MCF 10A (cell line): ENCODE measurements at regions of chr10 and their contacts with region 1.

Region 1: DNA sequence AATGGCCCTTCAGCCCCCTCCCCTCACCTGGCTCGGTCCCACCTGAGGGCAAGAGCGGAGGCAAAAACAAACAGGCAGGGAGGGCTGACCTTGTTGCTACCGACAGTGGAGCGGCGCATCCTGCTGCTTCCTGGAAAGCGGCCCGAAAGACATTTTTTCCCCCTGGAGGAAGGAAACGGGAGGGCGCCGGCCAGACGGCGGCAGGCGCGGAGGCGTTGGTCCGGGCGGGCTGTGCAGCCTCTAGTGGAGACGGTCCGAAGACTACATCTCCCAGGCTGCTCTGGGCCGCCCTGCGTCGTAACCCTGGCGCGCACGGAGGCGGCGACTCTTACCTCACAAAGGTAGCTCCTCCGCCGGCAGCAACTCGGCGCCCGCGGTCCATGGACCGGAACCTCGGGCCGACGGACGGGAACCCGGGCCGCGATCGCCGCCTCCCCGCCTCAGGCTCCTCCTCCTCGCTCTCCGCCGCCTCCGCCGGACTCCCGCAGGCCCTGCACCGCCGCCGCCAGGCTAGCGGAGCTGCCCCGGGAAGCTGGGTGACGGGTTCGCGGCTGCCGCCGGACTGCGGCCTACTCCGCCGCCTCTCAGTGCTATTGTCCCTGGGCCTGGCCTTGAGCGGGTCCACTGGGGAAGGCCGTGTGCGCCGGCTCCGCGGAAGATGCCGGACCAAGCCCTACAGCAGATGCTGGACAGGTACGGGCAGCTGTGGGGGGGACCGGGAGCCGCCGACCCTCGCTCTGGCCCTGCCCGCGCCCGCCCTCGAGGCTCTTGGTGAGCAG is at the starts of genes CPEB3 and MARCHF5:
- DNase-seq: peak; percentile 96
- H3K4me3 Mint-ChIP-seq: peak within 1 kb of the TSS; percentile 90
- H3K27ac Mint-ChIP-seq: peak within 1 kb of the TSS; percentile 83
- H3K4me1 Mint-ChIP-seq: peaks cover 5% of the 10 kb centered on the region
- H3K27me3 Mint-ChIP-seq: no peaks in the 10 kb centered on the region
- CTCF ChIP-seq: peak; percentile 52
- total RNA-seq, gene CPEB3: 2.8 and 4.2 TPM in 2 replicates
- total RNA-seq, gene MARCHF5: 52.1 and 53.1 TPM in 2 replicates

Region 2: DNA sequence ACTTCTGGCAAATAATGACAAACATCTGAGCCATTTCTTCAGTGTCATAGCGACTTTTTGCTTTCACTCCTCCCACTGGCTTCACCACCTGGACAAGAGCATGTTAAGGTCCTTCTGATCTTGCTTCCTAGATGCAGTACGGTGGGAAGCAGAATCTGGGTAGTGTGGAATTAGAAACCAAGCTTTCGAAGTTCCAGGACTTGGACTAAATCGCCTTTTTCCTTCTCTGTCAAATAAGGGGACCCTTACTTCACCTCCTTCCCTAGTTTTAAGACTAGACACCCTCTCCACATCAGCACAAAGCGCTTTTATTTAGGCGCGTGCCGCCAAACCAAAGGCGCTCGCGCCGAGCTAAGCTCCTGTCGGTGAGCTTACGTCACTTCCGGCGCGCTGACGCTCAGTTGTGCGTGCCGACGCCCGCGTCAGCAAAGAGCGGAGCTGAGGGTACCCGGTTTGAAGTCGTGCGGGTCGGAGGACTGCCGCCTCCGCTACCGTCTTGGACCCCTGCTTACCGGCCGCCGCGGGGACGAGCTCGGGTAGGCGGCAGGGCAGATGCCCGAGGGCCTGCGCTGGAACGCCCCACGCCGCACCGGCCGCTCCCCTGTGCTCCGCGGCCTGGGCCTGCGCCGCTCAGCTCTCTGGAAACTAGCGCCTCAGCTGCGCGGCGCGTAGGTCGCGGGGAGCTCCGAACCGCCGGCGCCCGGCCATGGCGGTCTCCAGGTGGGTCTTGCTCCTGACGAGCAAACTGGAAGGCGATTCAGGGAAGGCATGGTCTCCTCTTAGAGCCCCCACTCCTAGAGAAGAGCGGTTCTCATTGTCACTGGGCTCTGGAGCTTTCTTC is 367.4 kb before region 1 on chr10 and contains the start of gene BTAF1:
- CTCF ChIA-PET with region 1: interaction called, 7 read pairs
- POLR2A ChIA-PET with region 1: interaction called, 10 read pairs
- intact Hi-C with region 1: no loop called
- DNase-seq: peak; percentile 90
- H3K4me3 Mint-ChIP-seq: peak within 1 kb of the TSS; percentile 84
- H3K27ac Mint-ChIP-seq: peak within 1 kb of the TSS; percentile 98
- H3K4me1 Mint-ChIP-seq: peaks cover 17% of the 10 kb centered on the region
- H3K27me3 Mint-ChIP-seq: no peaks in the 10 kb centered on the region
- CTCF ChIP-seq: no peak
- total RNA-seq, gene BTAF1: 35.5 and 37.0 TPM in 2 replicates

Region 3: GRCh38 chr10:92103376-92104090 is 187.5 kb before region 1 on chr10:
- CTCF ChIA-PET with region 1: interaction called, 3 read pairs
- POLR2A ChIA-PET with region 1: interaction called, 10 read pairs
- intact Hi-C with region 1: loop called (anchors 1 kb)
- DNase-seq: no peak
- H3K4me3 Mint-ChIP-seq: no peak overlapping the region
- H3K27ac Mint-ChIP-seq: no peak overlapping the region
- H3K4me1 Mint-ChIP-seq: peaks cover 15% of the 10 kb centered on the region
- H3K27me3 Mint-ChIP-seq: no peaks in the 10 kb centered on the region
- CTCF ChIP-seq: no peak

Region 4: DNA sequence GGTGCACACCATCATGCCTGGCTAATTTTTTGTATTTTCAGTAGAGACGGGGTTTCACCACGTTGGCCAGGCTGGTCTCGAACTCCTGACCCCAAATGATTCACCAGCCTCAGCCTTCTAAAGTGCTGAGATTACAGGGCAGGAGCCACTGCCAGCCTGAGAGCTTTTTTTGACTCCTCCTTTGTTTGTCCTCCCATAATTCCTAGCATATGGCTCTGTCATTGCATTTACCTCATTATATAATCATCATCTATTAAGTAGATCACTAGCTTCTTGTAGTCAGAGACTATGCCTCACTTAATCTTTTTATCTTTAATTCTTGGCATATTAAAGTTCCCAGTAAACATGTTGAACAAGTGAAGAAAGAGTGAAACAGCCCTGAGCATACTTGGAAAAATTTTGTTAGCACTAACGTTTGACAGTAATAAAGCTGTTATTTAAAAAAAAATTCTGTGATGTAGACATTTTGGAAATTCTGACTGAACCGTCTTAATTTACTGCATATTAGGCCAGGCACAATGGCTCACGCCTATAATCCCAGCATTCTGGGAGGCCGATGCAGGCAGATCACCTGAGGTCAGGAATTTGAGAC is 82.2 kb before region 1 on chr10:
- CTCF ChIA-PET with region 1: interaction called, 5 read pairs
- POLR2A ChIA-PET with region 1: interaction called, 47 read pairs
- intact Hi-C with region 1: no loop called
- DNase-seq: no peak
- H3K4me3 Mint-ChIP-seq: no peak overlapping the region
- H3K27ac Mint-ChIP-seq: no peak overlapping the region
- H3K4me1 Mint-ChIP-seq: peaks cover 11% of the 10 kb centered on the region
- H3K27me3 Mint-ChIP-seq: no peaks in the 10 kb centered on the region
- CTCF ChIP-seq: no peak

Region 5: DNA sequence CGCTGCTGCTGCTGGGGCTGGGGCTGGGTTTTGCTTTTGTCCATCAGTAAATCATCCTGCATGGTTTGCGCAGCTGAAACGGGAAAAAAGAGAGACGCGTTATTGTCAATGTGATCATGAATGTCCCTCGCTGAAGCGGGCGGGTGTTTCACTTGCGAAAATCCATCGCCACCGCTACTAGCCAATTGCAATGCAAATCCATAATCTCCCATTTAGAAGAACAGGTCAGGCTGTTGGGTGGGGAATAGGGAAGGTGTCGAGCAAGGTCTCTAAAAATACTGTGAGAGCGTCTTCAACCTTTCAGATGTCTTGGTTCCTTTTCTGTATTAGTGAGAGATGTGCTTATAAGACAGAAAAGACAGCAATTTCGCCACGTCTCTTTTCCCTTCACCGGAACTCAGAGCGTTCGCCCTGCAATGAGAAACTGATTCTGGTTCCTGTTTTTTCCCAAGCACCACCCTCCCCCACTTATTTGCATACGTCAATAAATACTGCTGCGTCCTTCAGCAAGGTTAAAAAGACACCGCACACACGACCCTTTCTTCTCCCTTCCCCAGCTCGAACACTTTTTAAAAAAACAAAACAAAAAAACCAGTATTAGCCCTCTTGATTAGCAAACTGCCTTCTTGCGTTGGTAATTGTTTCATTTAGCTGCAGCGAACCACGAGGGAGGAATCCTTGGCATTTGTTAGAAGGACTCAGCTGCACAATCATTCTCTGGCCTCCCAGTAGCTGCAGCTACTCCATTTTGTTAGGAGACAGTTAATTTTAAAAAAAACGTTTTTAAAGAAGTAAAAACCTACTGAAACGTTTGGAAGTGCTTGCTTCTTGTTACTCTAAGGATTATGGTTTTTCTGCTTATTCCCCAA is 50.5 kb before region 1 on chr10:
- CTCF ChIA-PET with region 1: interaction called, 10 read pairs
- POLR2A ChIA-PET with region 1: interaction called, 371 read pairs
- intact Hi-C with region 1: loop called (anchors 1 kb)
- DNase-seq: peak; percentile 75
- H3K4me3 Mint-ChIP-seq: peak overlapping the region; percentile 76
- H3K27ac Mint-ChIP-seq: peak overlapping the region; percentile 14
- H3K4me1 Mint-ChIP-seq: peaks cover 35% of the 10 kb centered on the region
- H3K27me3 Mint-ChIP-seq: no peaks in the 10 kb centered on the region
- CTCF ChIP-seq: no peak

Region 6: DNA sequence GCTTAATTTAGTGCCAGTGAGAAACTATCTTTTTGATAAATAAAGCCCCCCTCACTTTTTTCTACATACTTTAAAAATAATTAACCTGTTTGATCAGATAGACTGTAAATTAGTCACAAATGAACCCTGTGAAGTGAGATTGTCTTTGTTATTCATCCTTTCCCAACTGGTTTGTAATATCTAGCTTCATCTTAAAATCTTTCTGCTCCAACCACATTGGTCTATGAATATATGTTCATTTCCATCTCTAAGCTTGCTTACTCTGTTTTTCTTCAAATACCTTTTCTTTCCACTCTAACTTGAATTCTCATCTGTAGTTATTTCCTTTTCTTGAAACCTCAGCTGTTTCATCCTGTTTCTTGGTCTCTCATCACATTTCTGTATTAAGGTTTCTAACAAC is 12.1 kb after region 1 on chr10:
- CTCF ChIA-PET with region 1: interaction called, 21 read pairs
- POLR2A ChIA-PET with region 1: interaction called, 10 read pairs
- intact Hi-C with region 1: no loop called
- DNase-seq: no peak
- H3K4me3 Mint-ChIP-seq: no peak overlapping the region
- H3K27ac Mint-ChIP-seq: no peak overlapping the region
- H3K4me1 Mint-ChIP-seq: peaks cover 15% of the 10 kb centered on the region
- H3K27me3 Mint-ChIP-seq: no peaks in the 10 kb centered on the region
- CTCF ChIP-seq: no peak

Region 7: DNA sequence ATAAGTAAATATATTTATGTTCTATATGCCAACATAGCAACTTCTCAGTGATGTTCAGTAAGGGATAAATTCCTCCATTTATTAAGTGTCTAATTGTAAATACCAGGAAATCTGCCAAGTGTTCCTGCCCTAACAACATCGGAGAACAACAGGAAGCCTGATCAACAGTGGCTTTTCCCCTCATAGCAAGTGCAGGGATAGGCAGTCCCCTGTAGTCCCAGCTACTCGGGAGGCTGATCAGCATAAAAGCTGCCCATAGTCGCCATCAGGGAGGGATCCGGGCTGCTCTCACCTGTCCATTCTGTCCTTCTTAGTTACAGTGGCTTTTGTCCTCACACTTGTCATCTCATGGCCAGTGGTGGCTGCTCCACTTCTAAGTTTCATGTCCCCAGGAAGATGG is 141.6 kb after region 1 on chr10:
- CTCF ChIA-PET with region 1: interaction called, 3 read pairs
- POLR2A ChIA-PET with region 1: interaction called, 6 read pairs
- intact Hi-C with region 1: loop called (anchors 1 kb)
- DNase-seq: no peak
- H3K4me3 Mint-ChIP-seq: no peak overlapping the region
- H3K27ac Mint-ChIP-seq: no peak overlapping the region
- H3K4me1 Mint-ChIP-seq: no peaks in the 10 kb centered on the region
- H3K27me3 Mint-ChIP-seq: no peaks in the 10 kb centered on the region
- CTCF ChIP-seq: no peak

Region 8: GRCh38 chr10:93199191-93199751 is 908.2 kb after region 1 on chr10:
- CTCF ChIA-PET with region 1: no interaction called
- POLR2A ChIA-PET with region 1: no interaction called
- intact Hi-C with region 1: no loop called
- DNase-seq: peak; percentile 57
- H3K4me3 Mint-ChIP-seq: no peak overlapping the region
- H3K27ac Mint-ChIP-seq: no peak overlapping the region
- H3K4me1 Mint-ChIP-seq: peaks cover 8% of the 10 kb centered on the region
- H3K27me3 Mint-ChIP-seq: no peaks in the 10 kb centered on the region
- CTCF ChIP-seq: no peak